Heart right ventricle (tissue), 16 donors: ENCODE measurements at regions of chr21 and their contacts with region 1.

Region 1: GRCh38 chr21:45287438-45288391 is at the start of gene POFUT2:
- DNase-seq: peak; percentile 97 to 99
- ATAC-seq: peak; percentile 89 to 93 (median 92)
- H3K4me3 ChIP-seq: peak within 1 kb of the TSS; percentile 41 to 77 (median 68)
- H3K27ac ChIP-seq: peak within 1 kb of the TSS in 9 of 10 donors; percentile 35 to 90 (median 81)
- H3K4me1 ChIP-seq: peaks cover 16 to 40% (median 28%) of the 10 kb centered on the region in 9 donors
- H3K27me3 ChIP-seq: no peaks in the 10 kb centered on the region
- CTCF ChIP-seq: peak in 1 of 9 donors; percentile 3
- total RNA-seq, gene POFUT2: 12.7 to 20.4 (median 16.3) TPM

Region 2: DNA sequence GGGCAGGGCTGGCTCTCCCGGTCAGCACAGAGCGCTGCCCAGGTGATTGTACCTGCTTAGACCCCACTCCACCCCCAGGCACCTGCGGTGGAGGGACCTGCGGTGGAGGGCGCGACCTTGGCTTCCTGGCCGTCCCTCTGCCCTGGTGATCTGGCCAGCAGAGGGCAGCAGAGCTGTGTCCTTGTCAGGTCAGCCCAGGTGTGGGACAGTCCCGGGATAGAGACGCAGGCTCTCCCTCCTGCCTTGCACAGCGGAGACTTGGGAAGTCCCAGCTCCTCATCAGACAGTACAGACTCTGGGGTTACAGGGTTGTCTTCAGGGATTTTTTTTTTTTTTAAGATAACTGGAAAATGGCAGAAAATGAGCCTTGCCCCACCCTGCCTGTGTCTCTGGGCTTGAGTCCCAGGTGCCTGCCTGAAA is 337.9 kb before region 1 on chr21:
- intact Hi-C with region 1: loop called in 2 of 10 experiments (anchors 10 kb)
- DNase-seq: peak; percentile 91 to 93
- ATAC-seq: peak; percentile 63 to 76 (median 67)
- H3K4me3 ChIP-seq: no peak overlapping the region
- H3K27ac ChIP-seq: peak overlapping the region; percentile 42 to 86 (median 79)
- H3K4me1 ChIP-seq: peaks cover 13 to 90% (median 53%) of the 10 kb centered on the region in 9 donors
- H3K27me3 ChIP-seq: no peaks in the 10 kb centered on the region
- CTCF ChIP-seq: peak; percentile 88 to 98 (median 96)

Region 3: DNA sequence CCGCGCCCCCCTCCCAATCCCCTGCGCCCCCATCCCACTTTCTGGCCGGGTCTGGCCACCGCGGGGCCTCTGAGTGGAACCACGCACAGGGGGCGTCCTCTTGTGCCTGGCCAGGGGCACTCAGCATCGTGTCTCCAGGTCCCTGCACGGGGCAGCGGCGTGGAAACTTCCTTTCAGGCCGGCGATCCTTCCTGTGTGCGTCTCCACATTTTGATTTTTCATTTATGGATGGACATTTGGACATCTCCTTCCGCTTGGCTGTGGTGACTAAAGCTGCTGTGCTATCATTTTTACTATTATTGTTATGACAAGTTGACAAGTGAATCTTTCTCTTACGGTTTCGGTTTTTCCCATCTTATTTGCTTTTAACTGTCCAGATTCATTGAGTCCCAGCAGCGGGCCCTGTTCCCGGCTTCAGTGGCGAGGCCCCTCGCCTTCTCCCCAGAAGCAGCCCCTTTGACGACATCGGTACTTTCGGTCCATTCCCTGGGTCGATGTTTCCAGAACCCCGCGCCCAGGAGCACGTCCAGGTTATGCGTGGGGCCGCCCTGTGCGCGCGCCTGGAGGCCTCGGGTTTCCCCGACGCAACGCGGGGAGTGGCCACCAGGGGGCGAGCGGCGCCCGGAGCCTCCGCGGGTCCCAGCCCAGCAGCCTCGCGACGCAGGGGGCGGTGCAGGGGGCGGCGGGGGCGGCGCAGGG is 266.9 kb after region 1 on chr21:
- intact Hi-C with region 1: loop called in 1 of 10 experiments (anchors 5 kb)
- DNase-seq: peak; percentile 73 to 90
- ATAC-seq: peak; percentile 68 to 87 (median 82)
- H3K4me3 ChIP-seq: peak overlapping the region in 9 of 10 donors; percentile 37 to 72 (median 56)
- H3K27ac ChIP-seq: peak overlapping the region in 4 of 10 donors; percentile 10 to 92 (median 60)
- H3K4me1 ChIP-seq: peaks cover 0 to 43% (median 6%) of the 10 kb centered on the region in 9 donors
- H3K27me3 ChIP-seq: peaks cover 0 to 18% (median 0%) of the 10 kb centered on the region in 7 donors
- CTCF ChIP-seq: peak; percentile 74 to 82 (median 78)

Region 4: GRCh38 chr21:45596704-45597318 is 309.1 kb after region 1 on chr21:
- intact Hi-C with region 1: loop called in 1 of 10 experiments (anchors 10 kb)
- DNase-seq: peak; percentile 64 to 73
- ATAC-seq: peak; percentile 68 to 85 (median 78)
- H3K4me3 ChIP-seq: no peak overlapping the region
- H3K27ac ChIP-seq: no peak overlapping the region
- H3K4me1 ChIP-seq: peaks cover 0 to 6% (median 0%) of the 10 kb centered on the region in 9 donors
- H3K27me3 ChIP-seq: peaks cover 0 to 43% (median 18%) of the 10 kb centered on the region in 7 donors
- CTCF ChIP-seq: peak; percentile 52 to 90 (median 79)